Naive thymus-derived CD4-positive, alpha-beta T cell (primary cell): ENCODE measurements at regions of chr3 and their contacts with region 1.

Region 1: DNA sequence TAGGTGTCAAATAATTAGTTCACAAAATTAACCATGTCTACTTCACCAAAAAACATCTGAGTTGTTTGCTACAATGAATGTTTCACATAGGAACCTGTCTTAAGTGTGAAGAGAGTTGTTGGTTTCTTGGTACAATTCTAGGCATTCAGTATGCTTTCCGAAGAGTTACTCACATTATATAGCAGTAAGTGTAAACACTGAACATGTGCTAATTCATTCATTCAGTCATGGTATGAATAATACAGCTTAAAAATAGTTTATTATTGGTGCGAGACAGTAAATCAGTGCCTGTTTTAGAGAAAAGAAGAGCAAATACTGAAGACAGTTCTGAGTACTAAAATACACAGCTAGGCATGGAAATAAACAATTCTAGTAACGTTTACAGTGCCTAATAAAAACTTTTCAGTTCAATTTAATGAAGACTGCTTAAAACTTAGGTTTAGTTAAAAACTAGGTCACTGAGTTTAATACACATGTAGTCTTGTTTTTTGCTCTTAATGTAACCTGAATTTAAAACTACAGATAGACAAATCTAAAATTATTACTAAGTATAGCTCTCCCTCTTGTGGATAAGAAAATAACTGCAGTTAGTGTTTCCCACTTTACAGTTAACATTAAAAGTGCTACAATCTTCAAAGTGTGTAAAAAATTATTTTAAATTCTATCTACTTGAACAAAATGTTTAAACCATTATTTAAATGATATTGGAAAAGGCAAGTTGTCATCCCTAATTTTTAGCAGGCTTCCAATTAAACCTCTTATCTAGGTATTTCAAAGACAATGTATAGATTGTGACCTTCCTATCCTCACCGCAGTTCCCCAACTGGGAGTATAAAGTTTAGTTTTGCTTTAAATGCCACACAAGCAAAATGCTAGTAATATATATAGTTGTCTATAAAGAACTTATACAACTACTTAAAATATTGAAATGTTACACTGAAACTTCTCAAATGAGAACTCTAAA is 20.1 kb upstream of the ZCWPW2 start:
- DNase-seq: peak in 6 of 9 donors; percentile 10 to 61 (median 47)
- ATAC-seq: peak; percentile 74
- H3K4me3 ChIP-seq: no peak overlapping the region
- H3K4me3 Mint-ChIP-seq: no peak overlapping the region
- H3K27ac ChIP-seq: no peak overlapping the region
- H3K27ac Mint-ChIP-seq: no peak overlapping the region
- H3K4me1 ChIP-seq: peaks cover 0 to 27% of the 10 kb centered on the region in 2 donors
- H3K4me1 Mint-ChIP-seq: peaks cover 0 to 35% (median 8%) of the 10 kb centered on the region in 7 donors
- H3K27me3 ChIP-seq: no peaks in the 10 kb centered on the region
- H3K27me3 Mint-ChIP-seq: no peaks in the 10 kb centered on the region

Region 2: DNA sequence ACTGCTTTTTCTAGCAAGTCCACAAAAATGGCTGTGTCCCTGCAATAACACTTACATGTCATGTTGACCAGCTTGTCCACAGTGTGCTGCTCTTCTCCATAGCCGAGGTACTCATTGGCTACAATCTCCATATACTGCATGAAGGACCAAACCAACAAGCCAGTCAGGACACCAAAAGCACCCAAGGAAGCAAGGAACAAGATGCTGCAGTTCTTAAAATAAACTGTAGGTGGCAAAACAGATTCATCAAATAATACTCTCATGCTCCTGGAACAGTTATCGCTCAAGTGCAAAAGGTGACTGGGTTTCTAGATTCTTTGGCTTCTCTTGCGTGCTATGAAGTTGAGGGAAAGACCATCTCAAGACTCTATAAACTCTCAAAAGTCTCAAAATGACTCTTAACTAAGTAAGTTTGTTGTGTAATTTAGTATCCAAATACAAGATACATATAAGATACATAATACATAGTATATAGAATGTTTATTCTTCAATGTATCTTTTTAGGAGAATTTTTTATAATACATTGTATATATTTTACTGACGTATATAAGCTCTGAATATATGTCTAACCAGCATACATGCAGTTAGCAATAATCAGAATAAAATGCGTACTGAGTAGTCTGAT is 1016.3 kb before region 1 on chr3:
- CTCF ChIA-PET with region 1: no interaction called
- POLR2A ChIA-PET with region 1: no interaction called
- intact Hi-C with region 1: loop called (anchors 2 to 5 kb)
- DNase-seq: peak in 7 of 9 donors; percentile 18 to 61 (median 44)
- ATAC-seq: peak; percentile 70
- H3K4me3 ChIP-seq: no peak overlapping the region
- H3K4me3 Mint-ChIP-seq: no peak overlapping the region
- H3K27ac ChIP-seq: no peak overlapping the region
- H3K27ac Mint-ChIP-seq: no peak overlapping the region
- H3K4me1 ChIP-seq: no peaks in the 10 kb centered on the region
- H3K4me1 Mint-ChIP-seq: peaks cover 0 to 4% (median 0%) of the 10 kb centered on the region in 7 donors
- H3K27me3 ChIP-seq: no peaks in the 10 kb centered on the region
- H3K27me3 Mint-ChIP-seq: peaks cover 0 to 20% (median 8%) of the 10 kb centered on the region in 5 donors

Region 3: DNA sequence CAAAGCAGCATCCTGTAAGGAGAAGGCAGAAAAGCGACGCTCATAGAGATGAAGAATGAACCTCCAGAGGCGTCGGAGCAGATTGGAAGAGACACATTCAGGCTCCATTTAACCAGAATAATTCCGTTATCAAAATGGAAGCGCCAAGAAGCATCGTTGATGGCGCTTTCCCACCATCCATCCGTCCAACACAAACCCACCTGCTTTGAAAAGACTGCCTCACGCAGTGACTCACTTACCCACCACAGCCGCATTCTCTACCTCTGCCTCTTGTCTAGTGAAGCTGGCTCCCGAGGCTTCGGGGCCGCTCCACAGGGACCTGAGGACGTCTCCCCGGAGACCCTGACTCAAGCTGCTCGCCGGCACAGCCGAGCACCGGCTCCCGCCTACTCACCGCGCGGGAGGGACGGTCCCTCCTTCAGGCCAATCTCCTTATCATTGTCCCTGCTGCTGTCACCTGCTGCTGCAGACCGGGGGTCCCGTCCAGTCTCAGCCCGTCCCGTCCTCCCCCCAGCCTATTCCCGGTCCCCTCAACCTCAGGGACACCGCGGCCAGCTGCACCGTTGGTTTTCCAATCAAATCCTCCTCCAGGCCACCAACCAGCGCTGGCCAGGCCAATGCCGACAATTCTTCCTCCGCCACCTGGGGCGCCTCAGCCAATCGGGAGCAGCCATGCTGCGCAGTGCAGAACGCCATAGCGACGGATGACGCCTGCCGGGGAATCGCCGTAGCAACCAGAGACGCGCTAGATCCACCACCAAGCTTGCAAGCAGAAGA is 959.5 kb before region 1 on chr3 and contains the start of gene NEK10:
- CTCF ChIA-PET with region 1: no interaction called
- POLR2A ChIA-PET with region 1: no interaction called
- intact Hi-C with region 1: loop called in 1 of 2 experiments (anchors 5 kb)
- DNase-seq: peak; percentile 86 to 94 (median 91)
- ATAC-seq: peak; percentile 100
- H3K4me3 ChIP-seq: peak within 1 kb of the TSS; percentile 96
- H3K4me3 Mint-ChIP-seq: peak within 1 kb of the TSS; percentile 81 to 96 (median 93)
- H3K27ac ChIP-seq: peak within 1 kb of the TSS; percentile 11
- H3K27ac Mint-ChIP-seq: peak within 1 kb of the TSS; percentile 26 to 91 (median 85)
- H3K4me1 ChIP-seq: peaks cover 5 to 9% of the 10 kb centered on the region in 2 donors
- H3K4me1 Mint-ChIP-seq: peaks cover 7 to 18% (median 14%) of the 10 kb centered on the region in 7 donors
- H3K27me3 ChIP-seq: no peaks in the 10 kb centered on the region
- H3K27me3 Mint-ChIP-seq: peaks cover 0 to 4% (median 0%) of the 10 kb centered on the region in 5 donors
- total RNA-seq, gene NEK10: 0.64 to 2.0 (median 0.95) TPM

Region 4: DNA sequence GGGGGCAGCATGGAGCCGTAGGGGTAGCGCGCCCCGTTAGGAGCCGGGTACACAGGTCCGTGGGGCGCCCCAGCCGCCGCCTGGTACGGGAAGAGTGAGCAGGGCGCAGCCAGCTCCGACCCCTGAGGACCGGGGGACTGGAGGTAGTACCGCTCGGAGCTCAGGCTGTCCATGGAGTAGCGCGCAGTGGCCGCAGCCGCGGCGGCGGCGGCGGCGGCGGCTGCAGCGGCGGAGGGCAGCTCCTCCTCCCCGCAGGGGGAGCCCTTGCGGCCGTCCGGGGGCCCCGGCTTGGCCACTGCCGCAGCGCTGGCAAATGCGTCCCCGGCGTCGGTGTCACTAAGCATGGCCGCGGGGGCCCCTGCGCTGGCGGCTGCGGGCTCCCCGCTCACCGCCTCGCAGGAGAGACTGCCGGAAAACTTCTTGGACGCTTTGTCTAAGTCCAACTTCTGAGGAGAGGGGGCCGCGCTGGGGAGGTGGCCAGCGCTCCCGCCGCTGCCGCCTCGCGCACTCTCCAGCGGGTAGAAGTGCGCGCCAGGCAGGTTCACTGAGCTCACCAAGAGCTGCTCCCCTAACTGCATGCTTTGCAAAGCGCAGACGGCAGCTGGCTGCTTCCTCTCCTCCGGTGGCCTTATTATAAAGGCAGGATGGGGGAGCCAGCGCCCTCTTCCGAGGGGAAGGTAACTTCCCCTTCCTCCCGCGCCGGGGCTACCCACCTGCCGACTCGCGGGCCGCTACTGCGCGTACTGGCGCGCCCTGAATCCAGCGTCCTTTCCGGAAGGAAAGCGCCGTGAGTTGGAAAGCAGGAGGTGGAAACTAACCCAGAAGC is 606.5 kb before region 1 on chr3 and contains the start of gene EOMES:
- CTCF ChIA-PET with region 1: interaction called, 12 read pairs
- POLR2A ChIA-PET with region 1: no interaction called
- intact Hi-C with region 1: no loop called
- DNase-seq: peak; percentile 57 to 81 (median 71)
- ATAC-seq: peak; percentile 84
- H3K4me3 ChIP-seq: peak within 1 kb of the TSS; percentile 68
- H3K4me3 Mint-ChIP-seq: peak within 1 kb of the TSS; percentile 79 to 93 (median 86)
- H3K27ac ChIP-seq: no peak within 1 kb of the TSS
- H3K27ac Mint-ChIP-seq: peak within 1 kb of the TSS in 3 of 9 donors; percentile 8 to 74 (median 56)
- H3K4me1 ChIP-seq: peaks cover 16 to 30% of the 10 kb centered on the region in 2 donors
- H3K4me1 Mint-ChIP-seq: peaks cover 19 to 42% (median 31%) of the 10 kb centered on the region in 7 donors
- H3K27me3 ChIP-seq: peaks cover 0 to 41% of the 10 kb centered on the region in 2 donors
- H3K27me3 Mint-ChIP-seq: peaks cover 44 to 89% (median 63%) of the 10 kb centered on the region in 5 donors
- total RNA-seq, gene EOMES: 0.67 to 9.5 (median 1.4) TPM

Region 5: GRCh38 chr3:28089527-28089897 is 239.0 kb before region 1 on chr3:
- CTCF ChIA-PET with region 1: no interaction called
- POLR2A ChIA-PET with region 1: no interaction called
- intact Hi-C with region 1: loop called in 1 of 2 experiments (anchors 2 kb)
- DNase-seq: peak in 5 of 9 donors; percentile 0 to 18 (median 8)
- ATAC-seq: no peak
- H3K4me3 ChIP-seq: no peak overlapping the region
- H3K4me3 Mint-ChIP-seq: peak overlapping the region in 1 of 10 donors; percentile 12
- H3K27ac ChIP-seq: no peak overlapping the region
- H3K27ac Mint-ChIP-seq: no peak overlapping the region
- H3K4me1 ChIP-seq: no peaks in the 10 kb centered on the region
- H3K4me1 Mint-ChIP-seq: peaks cover 0 to 10% (median 0%) of the 10 kb centered on the region in 7 donors
- H3K27me3 ChIP-seq: no peaks in the 10 kb centered on the region
- H3K27me3 Mint-ChIP-seq: no peaks in the 10 kb centered on the region

Region 6: GRCh38 chr3:28286595-28286994 is 41.9 kb before region 1 on chr3:
- CTCF ChIA-PET with region 1: interaction called, 11 read pairs
- POLR2A ChIA-PET with region 1: no interaction called
- intact Hi-C with region 1: loop called (anchors 1 kb)
- DNase-seq: peak in 6 of 9 donors; percentile 12 to 48 (median 36)
- ATAC-seq: peak; percentile 85
- H3K4me3 ChIP-seq: no peak overlapping the region
- H3K4me3 Mint-ChIP-seq: peak overlapping the region in 1 of 10 donors; percentile 66
- H3K27ac ChIP-seq: no peak overlapping the region
- H3K27ac Mint-ChIP-seq: no peak overlapping the region
- H3K4me1 ChIP-seq: peaks cover 0 to 10% of the 10 kb centered on the region in 2 donors
- H3K4me1 Mint-ChIP-seq: peaks cover 2 to 27% (median 13%) of the 10 kb centered on the region in 7 donors
- H3K27me3 ChIP-seq: no peaks in the 10 kb centered on the region
- H3K27me3 Mint-ChIP-seq: no peaks in the 10 kb centered on the region

Region 7: DNA sequence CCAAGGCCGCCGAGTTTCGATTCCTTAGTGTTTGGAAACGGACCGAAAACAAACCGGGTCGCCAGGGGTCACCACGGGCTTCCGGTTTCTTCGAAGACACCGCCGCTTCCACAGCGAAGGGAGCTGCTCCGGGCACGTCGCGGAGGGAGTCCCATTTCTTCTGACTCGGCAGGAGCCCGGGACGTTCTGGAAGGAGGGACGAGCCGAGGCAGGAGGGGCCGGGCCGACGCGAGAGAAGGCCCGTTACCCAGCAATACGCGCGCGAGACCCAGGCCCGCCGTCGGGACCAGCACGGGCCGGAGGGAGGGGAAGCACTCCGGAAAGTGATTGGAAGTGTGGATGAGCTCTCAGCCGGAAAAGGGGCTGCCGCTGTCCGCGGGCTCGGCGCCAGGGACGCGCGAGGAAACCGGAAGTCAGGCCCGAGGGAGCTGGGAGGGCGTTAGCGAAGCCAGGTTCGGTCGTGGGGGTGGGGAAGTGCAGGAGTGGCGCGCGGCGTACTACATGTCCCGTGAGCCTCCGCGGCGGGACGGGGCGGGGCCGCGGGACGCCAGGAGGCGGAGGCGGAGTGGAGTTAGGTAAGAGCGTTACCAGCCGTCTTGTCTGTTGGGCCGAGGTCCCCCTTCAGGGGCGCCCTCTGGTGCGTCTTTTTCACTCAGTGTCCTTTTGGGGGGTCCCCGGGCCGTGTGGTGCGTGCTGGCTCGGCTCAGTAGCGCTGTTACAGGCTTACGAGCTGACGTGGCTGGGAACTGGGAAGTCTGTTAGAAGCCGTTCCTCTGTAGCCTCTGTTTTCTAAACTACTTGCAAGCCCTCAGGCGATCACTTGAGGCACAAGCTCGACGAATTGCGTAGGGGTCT is 20.4 kb after region 1 on chr3 and contains the starts of genes AZI2 and ZCWPW2:
- CTCF ChIA-PET with region 1: interaction called, 5 read pairs
- POLR2A ChIA-PET with region 1: interaction called, 5 read pairs
- intact Hi-C with region 1: loop called in 1 of 2 experiments (anchors 1 kb)
- DNase-seq: peak; percentile 88 to 93 (median 92)
- ATAC-seq: peak; percentile 92
- H3K4me3 ChIP-seq: peak within 1 kb of the TSS; percentile 93
- H3K4me3 Mint-ChIP-seq: peak within 1 kb of the TSS; percentile 88 to 99 (median 94)
- H3K27ac ChIP-seq: peak within 1 kb of the TSS; percentile 92
- H3K27ac Mint-ChIP-seq: peak within 1 kb of the TSS; percentile 96 to 100 (median 98)
- H3K4me1 ChIP-seq: peaks cover 35 to 39% of the 10 kb centered on the region in 2 donors
- H3K4me1 Mint-ChIP-seq: peaks cover 30 to 70% (median 57%) of the 10 kb centered on the region in 7 donors
- H3K27me3 ChIP-seq: no peaks in the 10 kb centered on the region
- H3K27me3 Mint-ChIP-seq: no peaks in the 10 kb centered on the region
- total RNA-seq, gene AZI2: 39.7 to 54.0 (median 41.2) TPM
- total RNA-seq, gene ZCWPW2: 0.56 to 1.3 (median 0.81) TPM